ENCODE measurements at regions of chr11 and their contacts with region 1.

Region 1: GRCh38 chr11:117946842-117947526 is 17.8 kb upstream of the TMPRSS13 start:
- DNase-seq: peak; percentile 93
- H3K4me3 ChIP-seq: no peak overlapping the region
- H3K27ac ChIP-seq: no peak overlapping the region
- H3K4me1 ChIP-seq: no peaks in the 10 kb centered on the region
- H3K27me3 ChIP-seq: no peaks in the 10 kb centered on the region
- CTCF ChIP-seq: peak; percentile 93 to 97 (median 93)
- POLR2A ChIP-seq: no peak

Region 2: DNA sequence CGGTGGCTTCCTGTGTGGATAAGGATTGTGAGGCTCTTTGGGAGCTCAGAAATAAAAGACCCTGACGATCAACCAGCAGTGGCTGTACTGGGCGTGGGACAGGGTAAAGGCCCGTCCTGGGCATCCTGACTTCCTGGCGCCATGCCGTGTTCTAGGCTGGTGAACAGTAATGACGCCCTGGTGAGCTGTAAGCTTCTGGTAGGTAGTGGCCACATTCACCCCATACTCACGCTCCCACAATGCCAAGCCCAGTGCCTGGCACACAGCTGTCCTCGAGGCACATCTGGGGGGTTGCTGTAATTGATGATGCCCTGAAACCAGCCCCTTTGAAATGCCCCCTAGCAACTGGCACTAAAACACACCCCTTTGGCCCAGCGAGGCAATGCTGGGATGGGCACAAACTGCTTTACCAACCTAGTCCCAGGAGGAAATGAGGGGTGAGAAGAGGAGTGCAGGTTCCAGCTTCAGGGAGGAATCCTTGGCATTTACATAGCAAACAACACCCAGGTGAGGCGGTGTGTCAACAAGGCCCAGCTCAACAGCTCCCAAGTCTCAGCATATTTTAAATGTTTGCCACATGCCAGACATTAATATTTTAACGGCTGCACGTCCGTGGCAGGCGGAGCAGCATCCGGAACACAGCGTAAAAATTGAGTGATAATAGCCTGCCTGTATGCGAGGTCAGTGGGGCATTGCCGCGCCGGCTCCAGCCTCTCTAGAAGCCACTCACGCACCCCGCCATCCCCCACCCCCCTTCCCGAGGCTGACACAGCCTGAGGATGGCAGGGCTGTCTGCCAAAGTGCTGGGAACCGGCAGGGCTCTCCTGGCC is 229.3 kb before region 1 on chr11:
- intact Hi-C with region 1: no loop called
- DNase-seq: no peak
- H3K4me3 ChIP-seq: no peak overlapping the region
- H3K27ac ChIP-seq: no peak overlapping the region
- H3K4me1 ChIP-seq: no peaks in the 10 kb centered on the region
- H3K27me3 ChIP-seq: no peaks in the 10 kb centered on the region
- CTCF ChIP-seq: no peak
- POLR2A ChIP-seq: no peak

Region 3: DNA sequence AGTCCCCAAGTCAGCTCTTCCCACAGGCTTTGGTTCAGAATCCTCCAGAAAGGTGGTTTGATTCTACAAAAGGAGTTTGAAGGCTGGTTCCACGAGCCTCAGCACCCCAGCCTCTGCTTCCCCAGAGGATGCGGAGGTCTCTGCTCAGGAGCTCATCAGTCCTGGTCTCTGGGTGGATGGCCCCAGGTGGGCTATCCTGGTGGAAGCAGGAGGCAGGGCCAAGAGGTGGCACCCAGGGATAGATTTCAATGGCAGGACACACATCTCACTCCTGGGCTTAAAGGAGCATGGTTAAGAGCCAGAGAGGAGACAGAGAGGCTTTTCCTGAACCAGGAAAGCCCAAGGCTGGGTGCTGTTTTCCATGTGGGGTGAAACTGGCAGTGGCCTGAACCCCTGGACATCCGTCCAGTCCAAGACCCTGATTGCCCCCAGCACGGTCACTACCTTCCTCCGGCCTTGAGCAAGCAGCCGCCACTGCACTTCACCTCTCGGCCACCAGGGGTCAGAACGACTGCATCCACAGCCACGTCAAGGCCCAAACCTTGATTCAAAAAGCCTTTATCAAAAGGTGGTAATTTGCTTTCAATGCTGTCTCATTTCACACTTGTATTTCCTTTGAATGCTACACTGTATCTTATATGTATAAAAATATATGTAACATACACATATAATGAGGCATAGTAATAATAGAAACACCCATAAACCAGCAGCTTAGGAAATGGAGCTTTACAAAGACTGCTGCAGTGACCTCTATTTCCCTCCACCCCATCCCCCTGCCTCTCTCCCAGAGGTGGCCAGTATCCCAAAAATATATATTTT is 103.1 kb before region 1 on chr11:
- intact Hi-C with region 1: loop called (anchors 5 kb)
- DNase-seq: peak; percentile 93
- H3K4me3 ChIP-seq: no peak overlapping the region
- H3K27ac ChIP-seq: no peak overlapping the region
- H3K4me1 ChIP-seq: peaks cover 10% of the 10 kb centered on the region
- H3K27me3 ChIP-seq: no peaks in the 10 kb centered on the region
- CTCF ChIP-seq: peak; percentile 96 to 100 (median 98)
- POLR2A ChIP-seq: no peak

Region 4: DNA sequence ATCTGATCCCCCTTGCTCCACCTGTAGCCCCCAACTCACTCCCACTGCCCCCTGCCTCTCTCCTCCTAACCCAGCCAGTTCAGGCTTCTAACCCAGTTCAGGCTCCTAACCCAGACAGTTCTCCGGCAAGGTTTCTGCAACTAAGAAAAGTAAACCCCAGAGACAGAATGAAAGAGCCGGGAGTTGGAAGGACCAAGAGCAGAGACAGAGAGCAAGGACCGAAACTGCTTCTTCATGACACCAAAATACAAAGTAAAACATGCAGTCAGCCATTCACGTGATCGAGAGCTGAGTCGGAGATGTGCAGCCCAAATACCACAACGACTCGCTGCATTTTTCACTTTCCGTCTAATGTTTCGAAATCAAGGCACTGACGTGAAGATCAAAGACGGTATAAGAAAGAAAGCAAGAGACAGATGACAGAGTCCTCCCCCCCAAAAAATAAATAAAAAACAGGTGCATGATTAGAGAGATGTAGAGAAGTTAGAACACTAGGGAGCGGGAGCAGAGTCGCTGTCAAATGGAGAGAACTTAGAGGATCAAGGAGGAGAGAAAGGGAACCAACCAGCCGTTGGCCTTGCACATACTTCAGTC is 40.1 kb after region 1 on chr11:
- intact Hi-C with region 1: no loop called
- DNase-seq: no peak
- H3K4me3 ChIP-seq: peak overlapping the region; percentile 12 to 63
- H3K27ac ChIP-seq: peak overlapping the region; percentile 44 to 47
- H3K4me1 ChIP-seq: peaks cover 10% of the 10 kb centered on the region
- H3K27me3 ChIP-seq: no peaks in the 10 kb centered on the region
- CTCF ChIP-seq: no peak
- POLR2A ChIP-seq: no peak

Region 5: GRCh38 chr11:118051611-118052461 is 104.9 kb after region 1 on chr11:
- intact Hi-C with region 1: loop called (anchors 10 kb)
- DNase-seq: no peak
- H3K4me3 ChIP-seq: no peak overlapping the region
- H3K27ac ChIP-seq: no peak overlapping the region
- H3K4me1 ChIP-seq: no peaks in the 10 kb centered on the region
- H3K27me3 ChIP-seq: no peaks in the 10 kb centered on the region
- CTCF ChIP-seq: no peak
- POLR2A ChIP-seq: no peak

Measured in testis (tissue), 5 donors.